ENCODE measurements at regions of chr16 and their contacts with region 1.

Region 1: DNA sequence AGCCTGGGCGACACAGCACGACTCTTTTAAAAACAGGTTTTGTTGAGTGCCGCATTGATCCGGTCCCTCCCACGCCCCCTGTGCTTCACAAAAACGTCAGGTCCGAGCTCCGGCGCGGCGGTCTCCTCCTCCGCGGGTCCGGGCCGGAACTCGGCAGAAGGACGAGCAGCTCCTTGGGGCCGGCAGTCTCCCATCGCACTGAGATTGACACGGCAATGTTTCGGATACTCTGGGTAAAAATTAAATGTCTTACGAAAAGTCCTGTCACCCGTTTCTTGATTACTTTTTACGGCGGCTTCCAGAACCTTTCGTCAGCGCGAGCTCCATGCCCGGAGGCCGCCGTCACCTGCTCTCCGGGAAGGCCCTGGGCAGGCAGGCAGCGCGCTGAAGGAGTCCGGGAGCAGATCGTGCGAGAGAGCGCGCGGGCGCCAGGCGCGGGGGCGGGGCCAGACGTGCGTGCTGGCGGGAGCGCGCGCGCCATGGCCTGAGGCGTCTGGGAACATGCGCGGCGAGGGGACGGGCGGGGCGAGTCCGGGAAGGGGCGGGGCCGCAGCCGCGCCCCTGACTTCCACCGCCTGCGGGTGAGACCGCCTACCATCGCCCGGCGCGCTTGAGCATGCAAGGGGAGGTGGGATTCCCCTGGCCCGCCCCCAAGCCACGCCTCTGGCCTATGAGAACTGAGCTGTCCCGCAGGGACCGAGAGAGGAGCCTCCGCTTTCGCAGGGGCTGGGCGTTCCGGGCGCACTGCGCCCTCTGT is 11.7 kb upstream of the SRL start:
- DNase-seq: peak; percentile 100
- ATAC-seq: peak; percentile 97 to 99 (median 97)
- H3K4me3 ChIP-seq: peak overlapping the region; percentile 50 to 78 (median 64)
- H3K27ac ChIP-seq: peak overlapping the region; percentile 47 to 97 (median 93)
- H3K4me1 ChIP-seq: peaks cover 0 to 13% (median 5%) of the 10 kb centered on the region in 9 donors
- H3K27me3 ChIP-seq: no peaks in the 10 kb centered on the region
- CTCF ChIP-seq: no peak

Region 2: DNA sequence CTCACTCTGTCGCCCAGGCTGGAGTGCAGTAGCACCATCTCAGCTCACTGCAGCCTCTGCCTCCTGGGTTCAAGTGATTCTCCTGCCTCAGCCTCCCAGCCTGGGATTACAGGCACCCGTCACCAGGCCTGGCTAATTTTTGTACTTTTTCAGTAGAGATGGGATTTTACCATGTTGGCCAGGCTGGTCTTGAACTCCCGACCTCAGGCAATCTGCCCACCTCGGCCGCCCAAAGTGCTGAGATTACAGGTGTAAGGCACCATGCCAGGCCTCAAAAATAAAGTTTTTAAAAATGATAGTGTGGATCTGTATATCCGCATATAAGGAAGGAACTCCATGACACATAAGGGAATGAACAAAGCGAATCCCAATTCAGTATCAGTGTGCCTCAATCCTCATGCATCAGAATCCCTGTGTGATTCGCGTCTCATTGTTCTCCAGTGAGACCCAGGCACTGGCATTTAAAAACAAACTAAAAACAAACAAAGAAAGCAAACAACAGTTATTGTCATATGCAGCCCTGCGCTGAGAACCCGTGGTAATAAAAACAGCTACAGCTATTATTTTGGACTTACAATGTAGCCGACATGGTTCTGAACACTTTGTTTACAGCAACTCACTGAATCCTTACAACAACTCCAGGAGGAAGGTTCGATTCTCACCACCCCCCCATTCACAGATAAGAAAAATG is 318.9 kb before region 1 on chr16:
- intact Hi-C with region 1: loop called in 1 of 10 experiments (anchors 1 kb)
- DNase-seq: no peak
- ATAC-seq: no peak
- H3K4me3 ChIP-seq: no peak overlapping the region
- H3K27ac ChIP-seq: no peak overlapping the region
- H3K4me1 ChIP-seq: peaks cover 0 to 12% (median 10%) of the 10 kb centered on the region in 9 donors
- H3K27me3 ChIP-seq: no peaks in the 10 kb centered on the region
- CTCF ChIP-seq: no peak

Region 3: GRCh38 chr16:3945751-3946603 is 307.6 kb before region 1 on chr16:
- intact Hi-C with region 1: loop called in 1 of 10 experiments (anchors 10 kb)
- DNase-seq: peak in 1 of 2 donors; percentile 34
- ATAC-seq: no peak
- H3K4me3 ChIP-seq: no peak overlapping the region
- H3K27ac ChIP-seq: peak overlapping the region in 2 of 10 donors; percentile 6 to 53
- H3K4me1 ChIP-seq: peaks cover 6 to 39% (median 31%) of the 10 kb centered on the region in 9 donors
- H3K27me3 ChIP-seq: no peaks in the 10 kb centered on the region
- CTCF ChIP-seq: no peak

Region 4: GRCh38 chr16:3983081-3983520 is 270.5 kb before region 1 on chr16:
- intact Hi-C with region 1: loop called in 9 of 10 experiments (anchors 2 to 10 kb)
- DNase-seq: peak; percentile 65 to 73
- ATAC-seq: peak; percentile 72 to 88 (median 83)
- H3K4me3 ChIP-seq: no peak overlapping the region
- H3K27ac ChIP-seq: no peak overlapping the region
- H3K4me1 ChIP-seq: peaks cover 0 to 11% (median 0%) of the 10 kb centered on the region in 9 donors
- H3K27me3 ChIP-seq: no peaks in the 10 kb centered on the region
- CTCF ChIP-seq: peak; percentile 29 to 85 (median 74)

Region 5: GRCh38 chr16:4160658-4161430 is 92.7 kb before region 1 on chr16:
- intact Hi-C with region 1: no loop called
- DNase-seq: no peak
- ATAC-seq: no peak
- H3K4me3 ChIP-seq: no peak overlapping the region
- H3K27ac ChIP-seq: no peak overlapping the region
- H3K4me1 ChIP-seq: no peaks in the 10 kb centered on the region
- H3K27me3 ChIP-seq: no peaks in the 10 kb centered on the region
- CTCF ChIP-seq: peak in 1 of 9 donors; percentile 10

Region 6: GRCh38 chr16:4200000-4200780 is 53.4 kb before region 1 on chr16:
- intact Hi-C with region 1: loop called in 5 of 10 experiments (anchors 2 to 5 kb)
- DNase-seq: peak; percentile 66 to 69
- ATAC-seq: peak; percentile 45 to 86 (median 78)
- H3K4me3 ChIP-seq: no peak overlapping the region
- H3K27ac ChIP-seq: peak overlapping the region in 2 of 10 donors; percentile 3 to 9
- H3K4me1 ChIP-seq: peaks cover 0 to 19% (median 8%) of the 10 kb centered on the region in 9 donors
- H3K27me3 ChIP-seq: no peaks in the 10 kb centered on the region
- CTCF ChIP-seq: peak; percentile 29 to 82 (median 72)

Region 7: DNA sequence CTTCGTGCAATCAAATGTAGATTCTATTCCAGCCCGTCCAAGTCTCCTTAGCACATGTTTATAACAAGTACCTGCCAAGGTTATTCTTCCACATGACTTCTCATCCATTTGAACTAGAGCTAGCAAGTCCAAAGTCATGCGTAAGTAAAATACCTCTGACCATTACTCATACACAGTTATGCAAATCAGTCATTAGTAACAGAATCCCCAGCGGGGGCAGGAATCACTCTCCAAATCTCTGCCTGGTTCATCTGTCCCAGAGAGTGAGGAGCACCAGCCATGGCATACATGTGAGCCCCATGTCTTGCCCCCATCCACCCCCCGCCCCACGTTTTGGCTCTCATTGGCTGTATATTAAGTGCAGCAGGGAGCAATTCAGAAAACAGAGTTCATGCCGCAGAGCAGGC is 39.4 kb before region 1 on chr16:
- intact Hi-C with region 1: loop called in 2 of 10 experiments (anchors 5 kb)
- DNase-seq: no peak
- ATAC-seq: peak in 6 of 8 donors; percentile 15 to 49 (median 26)
- H3K4me3 ChIP-seq: no peak overlapping the region
- H3K27ac ChIP-seq: peak overlapping the region; percentile 76 to 97 (median 89)
- H3K4me1 ChIP-seq: peaks cover 40 to 97% (median 75%) of the 10 kb centered on the region in 9 donors
- H3K27me3 ChIP-seq: no peaks in the 10 kb centered on the region
- CTCF ChIP-seq: no peak

Measured in heart right ventricle (tissue), 16 donors.